CD14-positive monocyte (primary cell): ENCODE measurements at regions of chr1 and their contacts with region 1.

Region 1: DNA sequence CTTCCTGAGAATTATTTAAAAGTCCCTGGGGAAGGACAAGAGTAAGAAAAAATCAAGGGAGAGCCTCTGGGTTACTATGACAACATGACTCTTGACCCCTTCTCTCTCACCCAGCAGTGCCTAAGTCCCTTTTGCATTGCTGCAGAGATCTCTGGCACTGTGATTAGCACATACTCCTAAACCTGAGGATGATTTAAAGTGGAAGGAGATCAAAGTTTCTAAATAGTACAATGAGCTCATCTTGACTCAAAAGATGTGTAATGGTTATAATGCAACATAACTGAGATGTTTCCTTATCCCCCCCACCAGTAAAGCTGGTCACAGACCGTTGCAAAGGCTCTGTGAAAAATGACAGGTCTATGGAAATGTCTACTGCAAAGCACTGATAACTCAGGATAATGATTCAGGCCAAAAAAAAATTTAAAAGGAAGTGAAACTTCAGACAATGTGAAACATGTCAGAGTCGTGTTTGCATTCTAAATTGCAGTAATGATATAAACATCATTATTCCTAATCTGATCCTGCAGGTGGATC is 519.2 kb downstream of the KIF26B start:
- DNase-seq: peak; percentile 66 to 87 (median 76)
- H3K4me3 ChIP-seq: no peak overlapping the region
- H3K4me3 Mint-ChIP-seq: no peak overlapping the region
- H3K27ac ChIP-seq: peak overlapping the region in 1 of 2 donors; percentile 12
- H3K27ac Mint-ChIP-seq: peak overlapping the region in 6 of 7 donors; percentile 18 to 79 (median 66)
- H3K4me1 ChIP-seq: peaks cover 0 to 6% of the 10 kb centered on the region in 2 donors
- H3K4me1 Mint-ChIP-seq: peaks cover 15% of the 10 kb centered on the region
- H3K27me3 ChIP-seq: no peaks in the 10 kb centered on the region
- H3K27me3 Mint-ChIP-seq: peaks cover 1 to 4% (median 1%) of the 10 kb centered on the region in 3 donors
- CTCF ChIP-seq: no peak

Region 2: GRCh38 chr1:246214708-246215509 is 541.0 kb after region 1 on chr1:
- intact Hi-C with region 1: loop called in 1 of 2 experiments (anchors 10 kb)
- DNase-seq: peak; percentile 91 to 98 (median 96)
- H3K4me3 ChIP-seq: peak overlapping the region in 1 of 3 experiments; percentile 43
- H3K4me3 Mint-ChIP-seq: peak overlapping the region in 1 of 2 donors; percentile 82
- H3K27ac ChIP-seq: peak overlapping the region; percentile 67 to 88
- H3K27ac Mint-ChIP-seq: peak overlapping the region; percentile 88 to 97 (median 96)
- H3K4me1 ChIP-seq: peaks cover 27 to 60% of the 10 kb centered on the region in 2 donors
- H3K4me1 Mint-ChIP-seq: peaks cover 44% of the 10 kb centered on the region
- H3K27me3 ChIP-seq: no peaks in the 10 kb centered on the region
- H3K27me3 Mint-ChIP-seq: no peaks in the 10 kb centered on the region
- CTCF ChIP-seq: no peak